Endothelial cell of umbilical vein (primary cell): ENCODE measurements at regions of chr13 and their contacts with region 1.

Region 1: DNA sequence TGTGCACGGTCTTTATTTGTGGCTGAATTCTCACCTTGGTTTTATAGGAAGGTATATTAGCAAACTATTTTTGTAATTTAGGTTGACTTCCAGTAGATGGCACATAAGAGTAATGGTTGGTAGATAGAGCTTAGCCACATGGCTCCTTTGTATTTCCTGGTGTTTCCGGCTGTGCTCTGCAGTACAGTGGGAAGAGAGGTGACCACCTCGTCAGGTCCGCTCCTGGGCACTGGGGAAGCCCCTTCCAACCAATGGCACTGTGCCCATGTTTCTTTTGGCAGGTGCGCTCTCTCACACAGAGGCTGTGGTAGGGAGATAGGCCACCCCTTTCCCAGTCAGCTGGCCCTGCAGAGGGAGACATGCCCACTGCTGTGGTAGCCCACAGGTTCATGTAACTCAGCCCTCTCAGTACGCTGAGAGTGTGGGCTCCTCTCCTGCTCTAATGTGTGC is 74.3 kb upstream of the ATP12A start:
- DNase-seq: no peak
- H3K4me3 ChIP-seq: no peak overlapping the region
- H3K27ac ChIP-seq: no peak overlapping the region
- H3K4me1 ChIP-seq: no peaks in the 10 kb centered on the region
- H3K27me3 ChIP-seq: no peaks in the 10 kb centered on the region
- CTCF ChIP-seq: no peak
- POLR2A ChIP-seq: no peak

Region 2: DNA sequence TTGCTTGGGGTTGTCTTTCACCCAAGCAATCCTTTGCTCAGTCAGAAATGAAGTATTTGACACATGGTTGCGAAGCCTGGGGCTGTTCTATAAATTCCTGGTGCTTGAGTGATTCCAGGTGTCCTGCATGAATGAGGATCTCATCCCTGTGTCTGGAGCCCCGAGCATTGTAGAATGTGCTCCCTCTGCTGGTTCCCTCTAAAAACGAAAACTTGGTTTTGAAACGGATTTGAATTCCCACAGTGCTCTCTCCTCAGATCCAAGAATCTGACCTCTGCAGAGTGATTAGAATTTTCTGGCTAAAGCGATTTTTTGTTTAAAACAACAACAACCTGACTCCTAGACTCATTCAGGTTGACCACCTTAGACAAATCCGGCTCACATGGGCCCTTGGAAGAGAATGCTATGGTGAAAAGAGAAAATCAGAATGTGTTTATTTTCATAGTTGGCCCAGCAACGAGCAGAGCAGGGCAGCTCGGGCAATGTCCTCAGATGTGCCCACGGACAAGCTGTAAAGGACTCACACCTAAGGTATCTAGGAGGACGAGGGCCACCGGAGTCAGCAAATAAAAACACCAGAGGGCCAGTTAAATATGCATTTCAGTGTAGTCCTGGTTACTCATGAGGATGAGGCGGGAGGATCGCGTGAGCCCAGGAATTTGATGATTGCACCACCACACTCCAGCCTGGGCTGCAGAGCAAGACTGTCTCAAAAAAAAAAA is 65.6 kb after region 1 on chr13:
- CTCF ChIA-PET with region 1: interaction called, 15 read pairs
- POLR2A ChIA-PET with region 1: no interaction called
- dilution Hi-C with region 1: no loop called
- intact Hi-C with region 1: loop called (anchors 1 kb)
- DNase-seq: peak; percentile 51
- H3K4me3 ChIP-seq: no peak overlapping the region
- H3K27ac ChIP-seq: no peak overlapping the region
- H3K4me1 ChIP-seq: no peaks in the 10 kb centered on the region
- H3K27me3 ChIP-seq: peaks cover 4 to 13% of the 10 kb centered on the region in 2 experiments
- CTCF ChIP-seq: peak; percentile 38 to 67
- POLR2A ChIP-seq: no peak